Activated CD4-positive, alpha-beta T cell treated with anti-CD3 and anti-CD28 coated beads for 36 hours (primary cell): ENCODE measurements at regions of chr17 and their contacts with region 1.

Region 1: GRCh38 chr17:6903326-6903900 is 71.9 kb upstream of the TEKT1 start:
- DNase-seq: no peak
- ATAC-seq: no peak
- H3K4me3 Mint-ChIP-seq: no peak overlapping the region
- H3K27ac Mint-ChIP-seq: no peak overlapping the region
- H3K4me1 Mint-ChIP-seq: no peaks in the 10 kb centered on the region
- H3K27me3 Mint-ChIP-seq: no peaks in the 10 kb centered on the region

Region 2: DNA sequence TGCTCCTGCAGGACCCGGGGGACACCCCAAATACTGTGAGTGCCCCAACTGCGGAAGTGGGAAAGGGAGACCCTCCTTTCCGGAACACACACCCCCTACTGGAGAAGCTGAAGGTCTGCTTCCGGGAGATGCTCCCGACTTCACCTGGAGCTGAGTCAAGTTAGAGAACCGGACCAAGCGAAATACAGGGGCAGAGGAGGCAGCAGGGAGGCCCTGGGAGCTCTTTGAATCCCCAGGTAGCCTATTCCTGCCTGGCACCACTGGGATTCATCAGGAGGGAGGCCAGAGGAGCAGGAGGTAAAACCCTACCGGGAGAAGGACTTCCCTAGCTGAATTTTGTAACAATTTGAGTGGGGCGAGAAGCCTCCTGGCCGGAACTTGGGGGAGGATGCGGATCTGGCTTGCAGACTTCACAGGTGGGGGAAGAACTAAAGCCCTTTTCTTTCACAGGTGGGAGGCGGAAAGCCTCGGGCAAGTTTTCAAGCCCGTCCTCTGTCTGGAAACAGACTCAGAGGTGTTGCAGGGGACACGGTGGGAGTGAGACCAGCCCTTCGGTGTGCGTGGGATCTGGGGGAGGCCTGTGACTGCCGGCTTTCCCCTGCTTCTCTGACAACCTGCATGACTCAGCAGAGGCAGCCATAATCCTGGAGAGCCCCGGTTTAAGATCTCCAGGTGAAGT is 49.5 kb before region 1 on chr17:
- CTCF ChIA-PET with region 1: no interaction called
- POLR2A ChIA-PET with region 1: no interaction called
- intact Hi-C with region 1: no loop called
- DNase-seq: peak; percentile 50
- ATAC-seq: peak; percentile 47
- H3K4me3 Mint-ChIP-seq: peak overlapping the region; percentile 68
- H3K27ac Mint-ChIP-seq: peak overlapping the region; percentile 59
- H3K4me1 Mint-ChIP-seq: peaks cover 12% of the 10 kb centered on the region
- H3K27me3 Mint-ChIP-seq: no peaks in the 10 kb centered on the region

Region 3: GRCh38 chr17:7167832-7168231 is 264.4 kb after region 1 on chr17:
- CTCF ChIA-PET with region 1: no interaction called
- POLR2A ChIA-PET with region 1: no interaction called
- intact Hi-C with region 1: loop called in 1 of 2 experiments (anchors 10 kb)
- DNase-seq: no peak
- ATAC-seq: no peak
- H3K4me3 Mint-ChIP-seq: no peak overlapping the region
- H3K27ac Mint-ChIP-seq: no peak overlapping the region
- H3K4me1 Mint-ChIP-seq: no peaks in the 10 kb centered on the region
- H3K27me3 Mint-ChIP-seq: peaks cover 6% of the 10 kb centered on the region